ENCODE measurements at regions of chr16 and their contacts with region 1.

Region 1: DNA sequence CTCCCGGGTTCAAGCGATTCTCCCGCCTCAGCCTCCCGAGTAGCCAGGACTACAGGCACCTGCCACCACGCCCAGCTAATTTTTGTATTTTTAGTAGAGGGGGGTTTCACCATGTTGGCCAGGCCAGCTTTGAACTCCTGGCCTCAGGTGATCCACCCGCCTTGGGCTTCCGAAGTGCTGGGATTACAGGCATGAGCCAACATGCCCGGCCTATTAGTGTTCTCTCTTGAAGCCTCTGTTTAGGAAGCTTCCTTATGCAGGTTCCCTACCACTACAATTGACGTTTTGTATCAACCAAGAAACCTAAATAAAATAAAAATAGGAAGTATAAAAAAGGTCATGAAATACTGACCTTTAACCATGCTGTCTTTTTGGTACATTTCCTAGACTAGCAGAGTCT is 16.0 kb downstream of the CHST5 start:
- DNase-seq: no peak
- H3K4me3 Mint-ChIP-seq: no peak overlapping the region
- H3K27ac Mint-ChIP-seq: no peak overlapping the region
- H3K4me1 Mint-ChIP-seq: peaks cover 10% of the 10 kb centered on the region
- H3K27me3 Mint-ChIP-seq: no peaks in the 10 kb centered on the region
- CTCF ChIP-seq: no peak

Region 2: DNA sequence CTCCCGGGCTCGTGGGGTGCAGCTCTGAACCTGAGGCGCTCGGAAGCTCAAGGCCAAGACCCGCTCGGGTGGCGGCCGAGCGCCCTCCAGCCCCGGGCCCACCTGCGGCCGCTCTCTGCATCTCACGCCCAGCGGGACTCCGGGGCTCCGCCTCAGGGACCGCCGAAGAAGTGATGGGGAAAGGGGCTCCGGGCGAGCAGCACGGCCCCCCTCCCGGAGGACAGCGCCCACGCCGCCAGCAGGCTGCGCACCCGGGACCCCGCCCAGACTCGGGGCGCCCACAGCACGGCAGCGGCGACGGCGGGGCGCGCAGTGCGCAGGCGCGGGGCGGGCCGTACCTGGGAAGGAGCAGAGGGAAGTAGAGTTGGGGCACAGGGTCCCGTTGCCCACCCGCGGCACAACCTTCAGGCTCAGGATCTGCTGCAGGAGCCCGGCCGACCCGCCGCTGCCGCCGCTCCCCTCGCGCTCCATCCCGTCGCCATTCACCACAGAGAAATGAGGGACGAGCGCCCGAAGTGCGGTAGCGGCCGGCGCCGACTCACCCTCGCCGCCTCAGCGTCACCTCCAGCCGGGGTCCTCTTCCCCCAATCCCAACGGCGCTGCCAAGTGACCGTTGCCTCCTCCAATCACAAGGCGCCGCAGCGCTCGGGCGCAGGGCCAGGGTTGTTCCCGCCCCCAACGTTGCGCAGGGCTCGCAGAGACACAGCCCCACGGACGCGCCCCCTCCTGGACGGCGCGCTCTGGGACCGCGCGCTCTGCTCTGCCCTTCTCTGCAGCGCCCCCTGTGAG is 55.6 kb before region 1 on chr16 and contains the start of gene TMEM170A:
- CTCF ChIA-PET with region 1: interaction called, 13 read pairs
- intact Hi-C with region 1: no loop called
- DNase-seq: peak; percentile 100
- H3K4me3 Mint-ChIP-seq: peak within 1 kb of the TSS; percentile 93
- H3K27ac Mint-ChIP-seq: peak within 1 kb of the TSS; percentile 83
- H3K4me1 Mint-ChIP-seq: peaks cover 45% of the 10 kb centered on the region
- H3K27me3 Mint-ChIP-seq: no peaks in the 10 kb centered on the region
- CTCF ChIP-seq: peak; percentile 100
- total RNA-seq, gene TMEM170A: 48.4 and 52.5 TPM in 2 replicates

Region 3: GRCh38 chr16:75483222-75483621 is 36.7 kb before region 1 on chr16:
- CTCF ChIA-PET with region 1: interaction called, 14 read pairs
- intact Hi-C with region 1: no loop called
- DNase-seq: peak; percentile 72
- H3K4me3 Mint-ChIP-seq: peak overlapping the region; percentile 51
- H3K27ac Mint-ChIP-seq: peak overlapping the region; percentile 82
- H3K4me1 Mint-ChIP-seq: peaks cover 45% of the 10 kb centered on the region
- H3K27me3 Mint-ChIP-seq: peaks cover 4% of the 10 kb centered on the region
- CTCF ChIP-seq: no peak

Region 4: DNA sequence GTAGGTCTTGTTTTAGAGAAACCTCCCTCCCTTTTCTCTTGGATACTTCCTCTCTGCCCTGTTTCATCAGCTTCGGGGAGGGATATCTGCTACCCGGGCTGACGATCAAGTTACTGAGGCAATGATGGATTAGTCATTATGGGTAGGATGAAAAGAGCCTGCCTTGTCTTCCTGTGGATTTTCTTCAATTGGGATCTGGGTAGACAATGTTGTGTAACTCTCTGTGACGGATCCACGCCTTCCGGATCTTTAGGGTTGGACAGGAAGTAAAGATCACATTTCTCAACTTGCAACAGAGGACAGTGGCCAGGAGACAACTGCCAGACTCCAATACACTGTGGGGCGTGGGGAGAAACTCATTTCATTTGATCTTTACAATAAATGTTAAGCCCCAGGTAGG is 13.3 kb before region 1 on chr16:
- CTCF ChIA-PET with region 1: interaction called, 10 read pairs
- intact Hi-C with region 1: no loop called
- DNase-seq: peak; percentile 62
- H3K4me3 Mint-ChIP-seq: peak overlapping the region; percentile 6
- H3K27ac Mint-ChIP-seq: peak overlapping the region; percentile 91
- H3K4me1 Mint-ChIP-seq: peaks cover 17% of the 10 kb centered on the region
- H3K27me3 Mint-ChIP-seq: no peaks in the 10 kb centered on the region
- CTCF ChIP-seq: no peak

Region 5: GRCh38 chr16:75566040-75566810 is 46.3 kb after region 1 on chr16 and contains the start of gene GABARAPL2:
- CTCF ChIA-PET with region 1: interaction called, 14 read pairs
- intact Hi-C with region 1: loop called (anchors 2 kb)
- DNase-seq: peak; percentile 93
- H3K4me3 Mint-ChIP-seq: peak within 1 kb of the TSS; percentile 83
- H3K27ac Mint-ChIP-seq: peak within 1 kb of the TSS; percentile 75
- H3K4me1 Mint-ChIP-seq: peaks cover 32% of the 10 kb centered on the region
- H3K27me3 Mint-ChIP-seq: peaks cover 27% of the 10 kb centered on the region
- CTCF ChIP-seq: no peak
- total RNA-seq, gene GABARAPL2: 112 and 123 TPM in 2 replicates

Region 6: GRCh38 chr16:75754141-75754540 is 234.3 kb after region 1 on chr16:
- CTCF ChIA-PET with region 1: no interaction called
- intact Hi-C with region 1: no loop called
- DNase-seq: peak; percentile 20
- H3K4me3 Mint-ChIP-seq: no peak overlapping the region
- H3K27ac Mint-ChIP-seq: no peak overlapping the region
- H3K4me1 Mint-ChIP-seq: no peaks in the 10 kb centered on the region
- H3K27me3 Mint-ChIP-seq: peaks cover 62% of the 10 kb centered on the region
- CTCF ChIP-seq: no peak

Measured in Calu3 (cell line).